CD4-positive, alpha-beta memory T cell (primary cell): ENCODE measurements at regions of chr20 and their contacts with region 1.

Region 1: DNA sequence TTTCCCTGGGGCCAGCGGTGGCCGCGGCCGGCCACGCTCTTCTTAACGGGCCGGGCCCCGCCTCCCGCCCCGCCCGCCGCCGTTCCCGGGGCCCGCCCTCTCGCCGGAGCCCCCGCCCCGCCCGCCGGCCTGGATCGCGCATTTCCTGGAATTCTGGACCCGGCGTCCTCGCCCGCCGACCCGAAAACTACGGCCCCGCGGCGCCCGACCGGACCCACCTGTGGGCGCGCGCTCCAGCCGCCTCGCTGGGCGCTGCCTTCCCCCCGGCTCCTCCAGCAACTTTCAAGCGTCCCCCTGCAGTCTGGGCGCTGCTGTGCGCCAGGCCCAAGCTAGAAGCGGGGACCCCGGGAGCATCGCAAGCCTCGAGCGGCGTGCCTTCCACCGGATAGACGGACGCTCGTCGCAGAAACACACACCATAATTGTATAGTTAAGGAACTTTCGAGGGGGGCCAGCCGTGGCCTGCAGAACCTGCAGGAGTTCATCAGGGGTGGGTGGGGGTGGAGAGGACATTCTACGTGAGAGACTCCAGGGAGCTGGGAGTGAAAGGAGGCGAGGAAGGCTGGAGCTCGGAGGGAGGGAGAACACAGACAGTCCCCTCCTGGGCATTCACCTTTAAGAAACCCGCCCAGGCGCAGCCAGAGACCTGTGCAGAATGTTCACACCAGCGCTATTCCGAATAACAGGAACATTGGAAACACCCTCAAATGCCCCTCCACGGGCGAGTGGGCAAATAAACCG is at the start of gene ADA:
- DNase-seq: peak; percentile 39 to 57 (median 43)
- H3K4me3 ChIP-seq: peak within 1 kb of the TSS; percentile 76 to 81
- H3K4me3 Mint-ChIP-seq: peak within 1 kb of the TSS; percentile 91 to 98 (median 93)
- H3K27ac ChIP-seq: peak within 1 kb of the TSS; percentile 72
- H3K27ac Mint-ChIP-seq: peak within 1 kb of the TSS; percentile 91 to 97 (median 95)
- H3K4me1 ChIP-seq: peaks cover 52% of the 10 kb centered on the region
- H3K4me1 Mint-ChIP-seq: peaks cover 25 to 58% (median 47%) of the 10 kb centered on the region in 4 donors
- H3K27me3 ChIP-seq: no peaks in the 10 kb centered on the region
- H3K27me3 Mint-ChIP-seq: no peaks in the 10 kb centered on the region
- total RNA-seq, gene ADA: 28.4 to 31.0 TPM

Region 2: DNA sequence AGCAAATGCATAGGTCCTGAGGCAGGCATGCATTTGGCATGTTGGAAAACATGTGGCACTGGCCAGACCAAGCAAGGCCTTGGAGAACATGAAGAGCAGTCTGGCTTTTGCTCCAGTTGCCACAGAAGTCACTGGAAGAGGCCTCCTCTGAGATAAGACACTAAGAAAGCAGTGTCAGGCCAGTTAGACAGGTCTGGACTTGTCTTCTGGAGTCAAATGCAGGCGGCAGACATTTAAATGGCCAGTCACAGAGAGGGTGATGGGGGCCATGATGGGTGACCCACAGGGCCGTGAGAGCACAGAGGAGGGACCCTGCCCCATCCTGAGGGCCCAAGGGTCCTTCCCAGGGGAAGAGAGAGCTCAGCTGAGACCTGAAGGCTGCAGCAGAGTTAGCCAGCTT is 26.4 kb after region 1 on chr20:
- CTCF ChIA-PET with region 1: interaction called, 83 read pairs
- POLR2A ChIA-PET with region 1: interaction called, 21 read pairs
- intact Hi-C with region 1: no loop called
- DNase-seq: no peak
- H3K4me3 ChIP-seq: no peak overlapping the region
- H3K4me3 Mint-ChIP-seq: no peak overlapping the region
- H3K27ac ChIP-seq: no peak overlapping the region
- H3K27ac Mint-ChIP-seq: no peak overlapping the region
- H3K4me1 ChIP-seq: peaks cover under 1% of the 10 kb centered on the region
- H3K4me1 Mint-ChIP-seq: no peaks in the 10 kb centered on the region
- H3K27me3 ChIP-seq: no peaks in the 10 kb centered on the region
- H3K27me3 Mint-ChIP-seq: no peaks in the 10 kb centered on the region